ENCODE measurements at regions of chr12 and their contacts with region 1.

Region 1: GRCh38 chr12:21501379-21501956 is at the starts of genes GOLT1B and RECQL:
- DNase-seq: peak; percentile 71
- ATAC-seq: peak; percentile 95
- H3K4me3 Mint-ChIP-seq: no peak within 1 kb of the TSS
- H3K27ac Mint-ChIP-seq: no peak within 1 kb of the TSS
- H3K4me1 Mint-ChIP-seq: peaks cover 41% of the 10 kb centered on the region
- H3K27me3 Mint-ChIP-seq: no peaks in the 10 kb centered on the region
- CTCF ChIP-seq: no peak
- total RNA-seq, gene GOLT1B: 23.6 and 25.9 TPM in 2 replicates
- total RNA-seq, gene RECQL: 60.6 and 61.6 TPM in 2 replicates

Region 2: GRCh38 chr12:21438643-21439042 is 62.8 kb before region 1 on chr12:
- CTCF ChIA-PET with region 1: no interaction called
- POLR2A ChIA-PET with region 1: interaction called, 25 read pairs
- intact Hi-C with region 1: loop called (anchors 1 kb)
- DNase-seq: no peak
- ATAC-seq: no peak
- H3K4me3 Mint-ChIP-seq: peak overlapping the region; percentile 99
- H3K27ac Mint-ChIP-seq: peak overlapping the region; percentile 97
- H3K4me1 Mint-ChIP-seq: peaks cover 27% of the 10 kb centered on the region
- H3K27me3 Mint-ChIP-seq: peaks cover 2% of the 10 kb centered on the region
- CTCF ChIP-seq: no peak

Region 3: GRCh38 chr12:21476949-21477348 is 24.5 kb before region 1 on chr12:
- CTCF ChIA-PET with region 1: no interaction called
- POLR2A ChIA-PET with region 1: no interaction called
- intact Hi-C with region 1: no loop called
- DNase-seq: no peak
- ATAC-seq: no peak
- H3K4me3 Mint-ChIP-seq: no peak overlapping the region
- H3K27ac Mint-ChIP-seq: no peak overlapping the region
- H3K4me1 Mint-ChIP-seq: no peaks in the 10 kb centered on the region
- H3K27me3 Mint-ChIP-seq: no peaks in the 10 kb centered on the region
- CTCF ChIP-seq: no peak

Region 4: DNA sequence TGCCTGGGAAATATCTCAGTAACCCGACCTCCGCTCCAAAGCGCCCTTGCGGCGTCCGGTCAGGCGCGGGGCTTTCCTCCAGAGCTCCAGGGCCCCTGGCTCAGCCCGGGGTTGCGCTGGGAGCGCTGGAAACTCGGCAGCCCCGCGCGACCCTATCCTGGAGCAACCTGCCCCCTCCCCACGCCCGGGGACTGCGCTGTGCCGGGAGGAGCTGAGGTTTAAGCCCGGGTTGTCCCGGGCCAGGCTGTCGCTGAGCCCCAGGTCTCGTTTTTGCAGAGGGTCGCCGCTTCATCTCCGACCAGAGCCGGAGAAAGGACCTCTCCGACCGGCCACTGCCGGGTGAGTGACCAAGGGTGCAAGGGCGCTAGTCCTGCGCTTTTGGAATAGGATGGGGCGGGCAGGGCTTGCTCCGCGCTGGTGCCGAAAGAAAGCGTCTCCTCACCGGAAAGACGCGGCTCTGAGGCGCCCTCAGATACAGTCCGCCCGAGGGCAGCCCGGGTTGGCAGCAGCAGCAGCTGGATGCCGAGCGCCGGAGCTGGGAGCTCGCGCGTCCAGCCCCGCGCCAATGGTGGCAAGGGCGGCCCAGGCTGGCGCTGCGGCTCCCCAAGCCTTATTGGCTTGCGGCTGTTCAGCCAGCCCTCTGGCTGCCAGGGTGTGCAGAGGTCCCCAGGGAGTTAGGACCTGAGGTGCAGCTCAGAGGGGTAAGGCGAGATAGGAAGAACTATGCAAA is 26.1 kb after region 1 on chr12:
- CTCF ChIA-PET with region 1: no interaction called
- POLR2A ChIA-PET with region 1: interaction called, 18 read pairs
- intact Hi-C with region 1: loop called (anchors 1 kb)
- DNase-seq: peak; percentile 54
- ATAC-seq: peak; percentile 97
- H3K4me3 Mint-ChIP-seq: peak overlapping the region; percentile 74
- H3K27ac Mint-ChIP-seq: no peak overlapping the region
- H3K4me1 Mint-ChIP-seq: peaks cover 8% of the 10 kb centered on the region
- H3K27me3 Mint-ChIP-seq: peaks cover 24% of the 10 kb centered on the region
- CTCF ChIP-seq: no peak

Region 5: DNA sequence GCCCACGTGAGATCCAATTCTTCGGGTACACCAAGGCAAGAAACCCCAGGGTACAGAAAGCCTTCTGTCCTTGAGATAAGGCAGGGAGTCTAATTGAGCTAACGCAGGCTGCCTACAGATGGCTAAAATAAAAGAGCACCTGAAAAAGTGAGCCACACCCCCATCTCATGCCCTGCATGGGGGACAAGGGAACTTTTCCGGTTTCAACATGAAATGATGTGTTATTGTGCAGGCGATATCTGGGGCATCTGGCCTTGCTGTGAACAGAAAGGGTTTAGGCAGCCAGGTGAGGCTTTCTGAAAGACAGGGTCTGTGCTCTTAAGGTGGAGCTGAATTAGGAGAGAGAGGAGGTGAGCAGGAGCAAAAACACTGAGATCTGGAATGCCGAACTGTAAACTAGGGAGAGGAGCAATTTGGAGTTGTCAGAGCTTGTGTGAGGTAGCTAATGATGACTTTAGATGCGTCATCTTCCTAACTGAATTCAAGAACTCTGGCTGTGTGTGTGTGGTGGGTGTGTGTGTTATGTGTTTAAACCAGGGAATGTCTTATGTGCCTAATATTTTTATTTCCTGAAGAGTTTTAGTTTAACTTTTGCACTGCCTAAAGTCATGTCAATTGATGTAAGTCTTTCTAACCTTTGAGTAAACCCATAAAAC is 176.3 kb after region 1 on chr12:
- CTCF ChIA-PET with region 1: interaction called, 4 read pairs
- POLR2A ChIA-PET with region 1: no interaction called
- intact Hi-C with region 1: loop called (anchors 1 kb)
- DNase-seq: no peak
- ATAC-seq: no peak
- H3K4me3 Mint-ChIP-seq: no peak overlapping the region
- H3K27ac Mint-ChIP-seq: no peak overlapping the region
- H3K4me1 Mint-ChIP-seq: no peaks in the 10 kb centered on the region
- H3K27me3 Mint-ChIP-seq: peaks cover 13% of the 10 kb centered on the region
- CTCF ChIP-seq: no peak

Region 6: DNA sequence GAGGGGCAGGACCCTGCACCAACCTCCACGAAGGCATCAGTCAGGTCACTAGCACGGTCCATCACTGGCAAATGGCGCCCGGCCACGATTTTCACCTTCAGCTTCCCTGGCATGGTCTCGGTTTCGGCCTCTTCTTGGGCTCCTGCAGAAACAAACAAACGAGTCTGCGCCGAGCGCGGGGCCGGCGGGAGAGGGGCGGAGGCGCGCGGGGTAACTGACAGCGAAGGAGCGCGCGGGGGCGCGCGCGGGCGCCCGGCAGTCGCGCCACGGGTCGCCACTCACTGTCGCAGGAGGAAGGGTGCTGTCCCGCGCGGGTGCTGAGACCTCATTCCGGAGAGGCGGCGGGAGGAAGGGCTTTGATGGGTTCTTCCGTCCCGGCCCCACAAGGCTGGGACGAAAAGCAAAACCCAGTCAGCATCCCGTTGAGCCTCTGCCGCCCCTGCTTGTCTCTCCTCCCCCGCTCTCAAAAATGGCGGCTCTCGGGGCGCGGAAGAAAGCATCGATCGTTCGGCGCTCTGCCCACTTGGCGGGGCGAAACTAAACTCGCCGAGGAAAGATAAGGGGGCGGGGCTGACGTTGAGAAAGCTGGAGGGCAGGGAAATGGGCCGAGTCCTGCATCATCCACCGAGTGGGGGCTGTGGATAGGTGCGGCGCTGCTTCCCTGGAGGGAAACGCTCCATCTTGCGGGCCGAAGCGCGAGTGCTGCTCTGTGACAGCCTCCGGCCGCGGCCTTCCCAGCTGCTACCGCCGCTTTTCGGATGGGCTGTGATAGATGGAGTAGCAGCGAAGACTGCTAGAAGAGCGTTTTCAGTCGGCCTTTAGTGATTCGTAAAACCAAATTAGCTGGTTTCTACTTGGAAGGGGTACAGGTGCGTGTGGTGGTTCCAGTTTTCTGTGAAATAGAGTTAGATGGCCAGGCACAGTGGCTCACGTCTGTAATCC is 1042.8 kb after region 1 on chr12 and contains the start of gene C2CD5:
- CTCF ChIA-PET with region 1: no interaction called
- POLR2A ChIA-PET with region 1: interaction called, 9 read pairs
- intact Hi-C with region 1: loop called (anchors 2 kb)
- DNase-seq: peak; percentile 86
- ATAC-seq: peak; percentile 89
- H3K4me3 Mint-ChIP-seq: peak within 1 kb of the TSS; percentile 92
- H3K27ac Mint-ChIP-seq: peak within 1 kb of the TSS; percentile 96
- H3K4me1 Mint-ChIP-seq: peaks cover 42% of the 10 kb centered on the region
- H3K27me3 Mint-ChIP-seq: no peaks in the 10 kb centered on the region
- CTCF ChIP-seq: no peak
- total RNA-seq, gene C2CD5: 30.7 and 38.4 TPM in 2 replicates